Natural killer cell (primary cell): ENCODE measurements at regions of chr10 and their contacts with region 1.

Region 1: DNA sequence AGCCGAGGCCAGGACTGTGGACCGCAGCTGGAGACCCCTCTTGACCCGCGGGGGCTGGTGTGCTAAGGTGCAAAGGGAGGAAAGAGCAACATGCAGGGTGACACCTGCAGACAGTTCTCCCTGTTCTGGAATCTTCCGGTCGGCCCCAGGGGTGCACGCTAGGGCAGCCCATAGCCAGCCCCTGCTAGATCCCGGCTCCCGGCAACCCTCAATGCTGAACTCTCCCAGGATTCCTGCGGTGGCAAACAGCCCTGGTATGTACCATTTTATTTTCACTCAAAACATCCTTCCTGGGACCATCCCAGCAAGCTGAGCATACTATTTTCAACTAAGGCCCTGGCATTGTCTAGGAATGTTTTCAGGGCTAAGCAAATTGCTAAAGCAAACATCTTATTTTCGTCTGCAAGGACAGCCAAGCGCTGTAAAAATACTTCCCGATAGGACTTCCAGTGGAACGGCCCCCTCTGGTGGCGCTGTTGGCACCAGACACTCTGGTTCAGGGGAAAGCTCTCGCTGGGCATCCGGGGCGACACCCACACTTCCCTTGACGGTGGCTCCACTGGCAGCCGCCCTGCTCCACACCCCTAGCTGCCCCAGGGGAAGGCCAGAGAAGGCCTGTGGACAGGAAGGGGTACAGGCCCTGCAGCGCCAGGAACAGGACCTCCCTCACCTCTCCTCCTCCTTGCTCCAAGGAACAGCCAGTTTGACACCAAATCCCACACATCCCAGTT is 99.4 kb downstream of the CTBP2 start:
- DNase-seq: peak; percentile 42 to 54
- ATAC-seq: peak; percentile 40 to 47 (median 42)
- H3K4me3 ChIP-seq: no peak overlapping the region
- H3K4me3 Mint-ChIP-seq: peak overlapping the region; percentile 57
- H3K27ac ChIP-seq: no peak overlapping the region
- H3K27ac Mint-ChIP-seq: peak overlapping the region; percentile 72 to 81
- H3K4me1 ChIP-seq: peaks cover 93% of the 10 kb centered on the region
- H3K4me1 Mint-ChIP-seq: peaks cover 87 to 88% of the 10 kb centered on the region in 2 donors
- H3K27me3 ChIP-seq: no peaks in the 10 kb centered on the region
- H3K27me3 Mint-ChIP-seq: no peaks in the 10 kb centered on the region
- CTCF ChIP-seq: peak; percentile 72

Region 2: GRCh38 chr10:124992462-124993344 is 68.3 kb before region 1 on chr10:
- intact Hi-C with region 1: loop called (anchors 1 kb)
- DNase-seq: peak in 1 of 2 donors; percentile 43
- ATAC-seq: peak; percentile 68 to 88 (median 79)
- H3K4me3 ChIP-seq: no peak overlapping the region
- H3K4me3 Mint-ChIP-seq: no peak overlapping the region
- H3K27ac ChIP-seq: no peak overlapping the region
- H3K27ac Mint-ChIP-seq: peak overlapping the region; percentile 27 to 38
- H3K4me1 ChIP-seq: no peaks in the 10 kb centered on the region
- H3K4me1 Mint-ChIP-seq: peaks cover 6 to 8% of the 10 kb centered on the region in 2 donors
- H3K27me3 ChIP-seq: no peaks in the 10 kb centered on the region
- H3K27me3 Mint-ChIP-seq: no peaks in the 10 kb centered on the region
- CTCF ChIP-seq: peak; percentile 65

Region 3: DNA sequence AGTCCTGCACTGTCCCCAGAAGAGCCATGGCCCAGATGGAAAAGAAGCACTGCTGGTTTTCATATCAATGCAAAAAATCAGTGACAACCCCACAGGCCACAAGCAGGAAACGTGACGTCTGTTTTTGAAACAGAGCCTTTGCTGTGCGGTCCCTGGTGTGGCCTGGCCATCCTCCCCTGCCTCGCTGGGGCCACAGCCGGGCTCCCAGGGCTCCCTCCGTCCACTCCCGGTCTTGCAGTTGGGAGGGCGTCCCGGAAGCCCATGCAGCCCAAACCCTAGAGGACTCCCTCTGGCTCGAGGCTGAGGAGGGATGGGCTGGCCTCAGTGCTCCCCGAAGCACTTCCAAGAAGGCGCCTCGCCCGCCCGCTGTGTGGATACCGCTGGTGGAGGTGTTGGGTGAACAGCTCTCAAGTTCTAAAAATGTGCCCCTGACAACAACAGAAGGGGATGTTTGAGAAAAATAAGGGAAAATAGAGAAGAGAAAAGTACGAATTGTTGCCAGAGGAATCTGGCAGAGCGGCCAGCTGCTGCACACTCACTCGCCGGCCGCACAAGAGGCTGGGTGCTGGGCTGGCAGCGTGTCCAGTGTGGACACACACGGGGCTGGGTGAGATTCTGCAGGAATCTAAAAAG is 45.6 kb before region 1 on chr10:
- intact Hi-C with region 1: loop called (anchors 2 kb)
- DNase-seq: peak; percentile 49 to 70
- ATAC-seq: peak; percentile 83 to 92 (median 87)
- H3K4me3 ChIP-seq: no peak overlapping the region
- H3K4me3 Mint-ChIP-seq: peak overlapping the region; percentile 90
- H3K27ac ChIP-seq: peak overlapping the region; percentile 8
- H3K27ac Mint-ChIP-seq: peak overlapping the region; percentile 84 to 87
- H3K4me1 ChIP-seq: peaks cover 53% of the 10 kb centered on the region
- H3K4me1 Mint-ChIP-seq: peaks cover 73 to 80% of the 10 kb centered on the region in 2 donors
- H3K27me3 ChIP-seq: no peaks in the 10 kb centered on the region
- H3K27me3 Mint-ChIP-seq: no peaks in the 10 kb centered on the region
- CTCF ChIP-seq: no peak

Region 4: DNA sequence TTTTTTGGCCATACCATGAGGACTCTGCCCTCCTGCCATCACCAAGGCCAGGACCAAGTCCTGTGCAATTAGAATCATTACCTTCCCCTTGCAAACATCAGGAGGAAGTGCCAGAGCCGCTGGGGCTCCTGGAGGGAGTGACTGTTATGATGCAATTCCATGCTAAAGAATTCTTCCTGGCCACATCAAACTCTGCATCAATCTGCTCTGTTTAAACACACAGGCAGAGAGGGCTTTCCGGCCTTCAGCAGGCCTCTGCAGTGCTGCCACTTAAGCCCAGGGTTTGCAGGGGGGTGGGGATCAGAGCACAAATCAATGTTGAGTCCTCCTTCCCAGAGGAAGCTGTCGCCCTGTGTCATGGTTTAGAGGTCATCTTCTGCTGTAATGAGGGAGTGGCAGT is 41.2 kb after region 1 on chr10:
- intact Hi-C with region 1: no loop called
- DNase-seq: no peak
- ATAC-seq: no peak
- H3K4me3 ChIP-seq: no peak overlapping the region
- H3K4me3 Mint-ChIP-seq: no peak overlapping the region
- H3K27ac ChIP-seq: no peak overlapping the region
- H3K27ac Mint-ChIP-seq: peak overlapping the region; percentile 84 to 85
- H3K4me1 ChIP-seq: peaks cover 49% of the 10 kb centered on the region
- H3K4me1 Mint-ChIP-seq: peaks cover 84 to 91% of the 10 kb centered on the region in 2 donors
- H3K27me3 ChIP-seq: no peaks in the 10 kb centered on the region
- H3K27me3 Mint-ChIP-seq: no peaks in the 10 kb centered on the region
- CTCF ChIP-seq: no peak

Region 5: DNA sequence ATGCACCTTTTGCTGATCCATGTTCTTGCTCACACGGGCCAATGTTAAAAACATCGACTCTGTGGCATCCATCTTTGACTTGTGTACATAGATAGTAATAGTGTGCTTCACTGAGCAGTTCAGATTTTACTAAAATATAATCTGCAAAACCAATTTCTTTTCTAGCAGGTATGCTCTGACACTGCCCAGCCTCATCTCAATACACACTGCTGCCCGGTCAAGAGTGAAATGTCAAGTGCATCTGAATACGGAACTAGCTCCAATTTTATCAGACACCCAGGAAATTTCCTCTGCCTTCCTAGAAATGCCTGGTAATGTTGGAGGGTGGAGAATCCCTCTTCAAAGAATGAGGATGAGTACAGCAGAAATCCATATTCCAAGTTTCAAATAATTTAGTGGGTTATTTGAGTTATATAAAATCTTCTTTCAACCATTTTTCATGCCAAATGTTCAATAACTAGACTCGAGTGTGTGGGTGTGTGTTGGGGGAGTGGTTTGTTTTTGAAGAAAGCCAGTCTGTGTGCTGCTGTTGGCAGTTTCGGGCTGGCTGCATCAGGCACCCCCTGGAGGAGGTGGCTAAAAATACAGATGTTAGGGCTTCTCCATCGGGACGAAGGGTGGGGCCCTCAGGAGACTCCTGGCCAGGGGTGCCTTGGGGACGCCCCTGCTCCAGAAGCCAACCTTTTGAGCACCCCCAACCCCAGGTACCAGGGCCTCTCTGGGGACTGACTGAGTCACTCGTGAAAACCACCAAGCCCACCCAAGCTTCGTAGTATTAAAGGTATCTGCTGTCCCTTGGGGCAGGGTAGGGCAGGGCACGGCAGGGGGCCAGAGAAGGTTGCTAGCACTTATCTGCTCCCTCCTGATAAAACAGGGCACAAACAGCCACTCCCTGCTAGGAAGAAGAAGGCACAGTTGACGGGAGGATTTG is 84.0 kb after region 1 on chr10:
- intact Hi-C with region 1: loop called (anchors 1 kb)
- DNase-seq: no peak
- ATAC-seq: peak in 2 of 3 donors; percentile 37 to 52
- H3K4me3 ChIP-seq: no peak overlapping the region
- H3K4me3 Mint-ChIP-seq: peak overlapping the region; percentile 67
- H3K27ac ChIP-seq: no peak overlapping the region
- H3K27ac Mint-ChIP-seq: peak overlapping the region; percentile 97 to 98
- H3K4me1 ChIP-seq: peaks cover 95% of the 10 kb centered on the region
- H3K4me1 Mint-ChIP-seq: peaks cover 81 to 84% of the 10 kb centered on the region in 2 donors
- H3K27me3 ChIP-seq: no peaks in the 10 kb centered on the region
- H3K27me3 Mint-ChIP-seq: no peaks in the 10 kb centered on the region
- CTCF ChIP-seq: peak; percentile 46

Region 6: GRCh38 chr10:125151551-125152449 is 90.8 kb after region 1 on chr10:
- intact Hi-C with region 1: loop called (anchors 2 kb)
- DNase-seq: peak; percentile 23 to 76
- ATAC-seq: peak; percentile 63 to 82 (median 77)
- H3K4me3 ChIP-seq: peak overlapping the region; percentile 20
- H3K4me3 Mint-ChIP-seq: peak overlapping the region; percentile 82
- H3K27ac ChIP-seq: peak overlapping the region; percentile 56
- H3K27ac Mint-ChIP-seq: peak overlapping the region; percentile 97 to 98
- H3K4me1 ChIP-seq: peaks cover 81% of the 10 kb centered on the region
- H3K4me1 Mint-ChIP-seq: peaks cover 92 to 93% of the 10 kb centered on the region in 2 donors
- H3K27me3 ChIP-seq: no peaks in the 10 kb centered on the region
- H3K27me3 Mint-ChIP-seq: no peaks in the 10 kb centered on the region
- CTCF ChIP-seq: no peak